MCF 10A (cell line): ENCODE measurements at regions of chr19 and their contacts with region 1.

Region 1: DNA sequence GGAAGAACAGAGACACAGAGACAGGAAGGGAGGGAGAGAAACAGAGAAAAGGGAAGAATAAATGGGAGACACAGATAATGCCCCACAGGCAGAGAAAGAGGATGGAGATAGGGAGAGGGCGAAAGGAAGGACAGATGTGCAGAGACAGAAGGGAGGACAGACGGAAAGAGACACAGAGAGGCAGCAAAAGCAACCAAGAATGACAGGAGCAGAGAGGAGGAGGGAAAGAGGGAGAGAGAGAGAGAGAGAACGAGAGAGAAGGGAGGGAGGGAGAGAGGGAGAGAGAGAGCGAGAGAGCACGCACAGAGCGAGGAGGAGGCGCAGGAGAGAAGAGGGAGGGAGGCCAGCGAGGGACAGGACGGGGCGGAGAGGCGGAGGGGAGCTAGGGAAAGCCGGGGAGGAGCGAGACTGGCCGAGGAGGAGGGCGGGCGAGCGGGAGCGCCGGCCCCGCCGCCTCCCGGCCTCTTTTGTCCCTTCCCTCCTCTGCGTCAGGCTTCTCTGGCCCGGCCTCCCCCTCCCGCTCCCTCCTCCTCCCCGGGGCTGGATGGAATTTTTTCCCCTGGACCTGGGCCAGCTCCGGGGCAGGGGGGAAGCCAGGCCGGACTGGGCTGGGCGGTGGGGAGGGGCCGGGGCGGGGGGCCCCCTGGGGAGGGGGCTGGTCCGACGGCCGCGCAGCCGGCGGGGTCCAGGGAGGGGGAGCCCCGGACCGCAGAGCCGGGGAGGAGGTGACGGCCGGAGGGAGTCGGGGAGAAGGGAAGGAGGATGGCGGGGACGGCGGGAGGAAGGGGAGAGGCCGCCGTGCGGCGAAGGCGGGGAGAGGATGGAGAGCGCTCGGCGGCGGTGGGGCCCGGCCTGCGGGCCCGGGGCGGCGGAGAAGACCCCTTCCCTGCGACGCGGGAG is 4.2 kb upstream of the SPACA6 start:
- DNase-seq: peak; percentile 95
- H3K4me3 Mint-ChIP-seq: peak overlapping the region; percentile 73
- H3K27ac Mint-ChIP-seq: peak overlapping the region; percentile 52
- H3K4me1 Mint-ChIP-seq: peaks cover 42% of the 10 kb centered on the region
- H3K27me3 Mint-ChIP-seq: no peaks in the 10 kb centered on the region
- CTCF ChIP-seq: no peak

Region 2: GRCh38 chr19:51427201-51427600 is 261.7 kb before region 1 on chr19:
- CTCF ChIA-PET with region 1: no interaction called
- POLR2A ChIA-PET with region 1: no interaction called
- intact Hi-C with region 1: no loop called
- DNase-seq: no peak
- H3K4me3 Mint-ChIP-seq: no peak overlapping the region
- H3K27ac Mint-ChIP-seq: no peak overlapping the region
- H3K4me1 Mint-ChIP-seq: no peaks in the 10 kb centered on the region
- H3K27me3 Mint-ChIP-seq: no peaks in the 10 kb centered on the region
- CTCF ChIP-seq: no peak

Region 3: DNA sequence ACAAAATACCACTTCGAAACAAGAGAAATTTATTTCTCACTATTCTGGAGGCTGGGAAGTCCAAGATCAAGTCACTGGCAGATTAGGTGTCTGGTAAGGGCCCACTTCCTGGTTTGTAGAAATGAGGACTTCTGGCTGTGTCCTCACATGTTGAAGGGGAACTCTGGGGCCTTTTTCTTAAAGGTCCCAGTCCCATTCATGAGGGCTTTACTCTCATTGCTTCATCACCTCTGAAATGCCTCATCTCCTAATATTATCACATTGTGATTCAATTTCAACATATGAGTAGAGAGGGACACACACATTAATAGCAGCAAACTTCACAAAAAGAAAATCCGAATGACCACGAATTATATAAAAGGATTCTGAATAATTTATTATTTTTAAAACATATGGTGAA is 20.7 kb before region 1 on chr19:
- CTCF ChIA-PET with region 1: interaction called, 10 read pairs
- POLR2A ChIA-PET with region 1: interaction called, 23 read pairs
- intact Hi-C with region 1: no loop called
- DNase-seq: no peak
- H3K4me3 Mint-ChIP-seq: no peak overlapping the region
- H3K27ac Mint-ChIP-seq: no peak overlapping the region
- H3K4me1 Mint-ChIP-seq: no peaks in the 10 kb centered on the region
- H3K27me3 Mint-ChIP-seq: peaks cover 9% of the 10 kb centered on the region
- CTCF ChIP-seq: no peak

Region 4: GRCh38 chr19:51703575-51704515 is 14.9 kb after region 1 on chr19:
- CTCF ChIA-PET with region 1: interaction called, 5 read pairs
- POLR2A ChIA-PET with region 1: interaction called, 39 read pairs
- intact Hi-C with region 1: loop called (anchors 1 kb)
- DNase-seq: peak; percentile 95
- H3K4me3 Mint-ChIP-seq: peak overlapping the region; percentile 83
- H3K27ac Mint-ChIP-seq: peak overlapping the region; percentile 90
- H3K4me1 Mint-ChIP-seq: peaks cover 59% of the 10 kb centered on the region
- H3K27me3 Mint-ChIP-seq: no peaks in the 10 kb centered on the region
- CTCF ChIP-seq: no peak